Activated CD8-positive, alpha-beta T cell treated with anti-CD3 and anti-CD28 coated beads, Interleukin-2, amount 10 ng/mL, durations not matched to agents 7 days and 5 days (primary cell): ENCODE measurements at regions of chr11 and their contacts with region 1.

Region 1: GRCh38 chr11:118051611-118052461 is 25.0 kb upstream of the TMPRSS4 start:
- DNase-seq: peak; percentile 86
- ATAC-seq: peak; percentile 91
- H3K4me3 Mint-ChIP-seq: peak overlapping the region; percentile 44
- H3K27ac Mint-ChIP-seq: peak overlapping the region; percentile 89
- H3K4me1 Mint-ChIP-seq: peaks cover 64% of the 10 kb centered on the region
- H3K27me3 Mint-ChIP-seq: peaks cover 2% of the 10 kb centered on the region

Region 2: GRCh38 chr11:117817368-117818040 is 234.3 kb before region 1 on chr11:
- CTCF ChIA-PET with region 1: interaction called, 119 read pairs
- POLR2A ChIA-PET with region 1: interaction called, 16 read pairs
- DNase-seq: peak; percentile 92
- ATAC-seq: peak; percentile 31
- H3K4me3 Mint-ChIP-seq: peak overlapping the region; percentile 47
- H3K27ac Mint-ChIP-seq: peak overlapping the region; percentile 95
- H3K4me1 Mint-ChIP-seq: peaks cover 81% of the 10 kb centered on the region
- H3K27me3 Mint-ChIP-seq: no peaks in the 10 kb centered on the region

Region 3: GRCh38 chr11:117907251-117907981 is 144.4 kb before region 1 on chr11:
- CTCF ChIA-PET with region 1: interaction called, 35 read pairs
- POLR2A ChIA-PET with region 1: no interaction called
- DNase-seq: peak; percentile 78
- ATAC-seq: peak; percentile 95
- H3K4me3 Mint-ChIP-seq: peak overlapping the region; percentile 22
- H3K27ac Mint-ChIP-seq: peak overlapping the region; percentile 70
- H3K4me1 Mint-ChIP-seq: peaks cover 20% of the 10 kb centered on the region
- H3K27me3 Mint-ChIP-seq: no peaks in the 10 kb centered on the region

Region 4: DNA sequence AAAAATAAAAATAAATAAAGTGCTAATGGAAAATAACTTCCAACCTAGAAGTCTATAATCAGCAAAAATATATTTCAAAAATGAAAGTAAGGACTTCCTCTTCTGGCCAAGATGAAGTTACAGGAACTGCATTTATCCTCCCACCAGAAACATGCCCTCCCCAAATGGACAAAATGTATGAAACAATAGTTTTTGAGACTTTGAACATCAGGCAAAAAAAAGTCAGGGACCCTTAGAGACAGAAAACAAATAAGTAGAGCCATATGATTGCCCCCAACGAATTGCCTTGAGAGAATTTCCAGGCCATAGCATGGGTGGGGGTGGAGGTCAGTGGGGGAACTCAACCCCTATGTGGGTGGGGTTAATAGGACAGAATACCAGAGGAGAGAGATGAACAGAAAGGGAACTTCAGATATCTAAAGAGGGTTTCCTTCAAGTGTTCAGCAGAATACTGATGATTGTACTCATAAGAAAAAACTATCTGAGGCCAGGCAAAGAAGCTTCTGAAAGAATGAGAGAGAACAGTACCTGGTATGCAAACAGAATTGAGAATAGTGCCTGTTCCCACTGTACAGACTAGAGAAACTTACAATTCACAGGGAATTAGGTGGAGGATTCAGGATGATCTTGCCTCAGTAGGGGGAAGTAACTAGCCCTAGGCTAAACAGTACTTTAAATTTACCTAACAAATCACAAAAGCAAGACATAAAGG is 92.2 kb before region 1 on chr11:
- CTCF ChIA-PET with region 1: interaction called, 432 read pairs
- POLR2A ChIA-PET with region 1: no interaction called
- DNase-seq: no peak
- ATAC-seq: no peak
- H3K4me3 Mint-ChIP-seq: no peak overlapping the region
- H3K27ac Mint-ChIP-seq: peak overlapping the region; percentile 80
- H3K4me1 Mint-ChIP-seq: peaks cover 44% of the 10 kb centered on the region
- H3K27me3 Mint-ChIP-seq: no peaks in the 10 kb centered on the region

Region 5: DNA sequence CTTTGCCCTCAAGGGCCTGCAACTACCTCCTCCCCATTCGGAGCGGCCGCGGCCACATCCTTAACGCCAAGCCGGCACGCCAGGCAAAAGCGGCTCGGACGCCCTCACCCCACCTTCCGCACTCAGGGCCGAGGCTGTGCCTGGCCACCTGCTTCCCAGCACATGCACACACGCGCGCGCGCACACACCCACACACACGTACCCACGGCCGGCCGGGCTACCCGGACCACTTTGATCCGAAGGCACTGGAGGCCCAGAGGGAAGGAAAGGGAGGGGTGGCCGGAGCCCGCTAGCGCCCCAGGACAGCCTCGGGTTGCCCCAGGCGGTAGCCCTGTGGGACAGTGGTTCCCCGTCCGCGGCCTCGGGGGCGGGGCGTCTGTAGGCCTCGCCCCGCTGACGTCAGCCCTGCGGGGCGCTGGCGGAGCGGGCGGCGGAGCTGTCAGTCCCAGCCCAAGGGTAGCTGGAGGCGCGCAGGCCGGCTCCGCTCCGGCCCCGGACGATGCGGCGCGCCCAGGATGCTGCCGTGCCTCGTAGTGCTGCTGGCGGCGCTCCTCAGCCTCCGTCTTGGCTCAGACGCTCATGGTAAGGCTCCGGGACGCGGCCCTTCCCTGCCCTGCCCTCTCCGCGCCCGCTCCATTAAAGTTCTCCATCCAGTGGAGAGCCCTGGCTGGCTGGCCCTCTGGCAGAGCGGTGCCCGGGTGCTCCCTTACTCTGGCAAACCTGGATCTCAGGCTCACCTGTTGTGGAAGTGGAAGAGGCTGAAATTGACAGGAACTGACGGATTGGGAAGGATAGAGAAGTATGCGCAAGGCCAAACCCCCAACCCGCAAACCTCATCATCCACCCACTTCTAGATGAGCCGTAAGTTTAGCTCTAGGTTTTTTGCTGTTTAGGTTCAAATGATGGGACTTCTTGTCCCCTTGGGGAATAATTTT is 65.6 kb before region 1 on chr11 and contains the start of gene IL10RA:
- CTCF ChIA-PET with region 1: interaction called, 84 read pairs
- POLR2A ChIA-PET with region 1: interaction called, 62 read pairs
- DNase-seq: peak; percentile 88
- ATAC-seq: peak; percentile 89
- H3K4me3 Mint-ChIP-seq: peak within 1 kb of the TSS; percentile 96
- H3K27ac Mint-ChIP-seq: peak within 1 kb of the TSS; percentile 97
- H3K4me1 Mint-ChIP-seq: peaks cover 70% of the 10 kb centered on the region
- H3K27me3 Mint-ChIP-seq: no peaks in the 10 kb centered on the region
- total RNA-seq, gene IL10RA: 202 to 210 TPM

Region 6: DNA sequence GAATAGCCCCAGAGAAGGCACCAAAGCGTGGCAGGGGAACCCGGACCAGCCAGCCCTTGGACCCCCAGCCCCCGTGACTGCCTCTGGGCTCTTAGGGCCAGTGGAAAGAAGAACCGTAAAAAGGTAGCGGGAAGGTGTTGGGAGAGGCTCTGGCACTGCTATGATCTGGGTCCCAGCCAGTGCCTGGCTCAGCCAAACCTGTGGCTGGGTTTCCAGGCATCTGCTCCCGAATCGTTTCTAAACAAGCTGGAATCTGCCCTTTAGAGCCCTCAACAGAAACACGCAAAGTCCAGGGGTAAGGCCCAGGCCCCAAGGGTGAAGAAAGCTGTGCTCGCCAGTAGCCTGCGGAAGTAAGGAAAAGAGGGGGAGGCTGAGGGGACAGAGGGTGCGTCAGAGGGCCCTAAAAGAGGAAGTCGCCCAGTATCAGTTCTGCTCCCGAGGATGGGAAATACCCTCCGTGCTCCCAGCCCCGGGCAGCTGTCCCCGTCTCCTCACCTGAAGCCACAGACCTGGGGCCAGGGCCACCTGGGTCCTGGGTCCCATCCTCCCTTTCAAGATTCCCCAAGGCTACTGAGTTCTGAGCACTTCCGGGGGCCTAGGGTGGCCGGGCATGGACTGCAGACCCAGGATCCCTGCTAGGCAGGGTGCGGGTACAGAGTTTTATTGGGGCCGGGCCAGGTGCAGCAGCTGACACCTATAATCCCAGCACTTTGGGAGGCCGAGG is 40.9 kb before region 1 on chr11:
- CTCF ChIA-PET with region 1: interaction called, 168 read pairs
- POLR2A ChIA-PET with region 1: interaction called, 33 read pairs
- DNase-seq: no peak
- ATAC-seq: no peak
- H3K4me3 Mint-ChIP-seq: no peak overlapping the region
- H3K27ac Mint-ChIP-seq: peak overlapping the region; percentile 90
- H3K4me1 Mint-ChIP-seq: peaks cover 100% of the 10 kb centered on the region
- H3K27me3 Mint-ChIP-seq: no peaks in the 10 kb centered on the region